A549 (cell line): ENCODE measurements at regions of chr1 and their contacts with region 1.

Region 1: DNA sequence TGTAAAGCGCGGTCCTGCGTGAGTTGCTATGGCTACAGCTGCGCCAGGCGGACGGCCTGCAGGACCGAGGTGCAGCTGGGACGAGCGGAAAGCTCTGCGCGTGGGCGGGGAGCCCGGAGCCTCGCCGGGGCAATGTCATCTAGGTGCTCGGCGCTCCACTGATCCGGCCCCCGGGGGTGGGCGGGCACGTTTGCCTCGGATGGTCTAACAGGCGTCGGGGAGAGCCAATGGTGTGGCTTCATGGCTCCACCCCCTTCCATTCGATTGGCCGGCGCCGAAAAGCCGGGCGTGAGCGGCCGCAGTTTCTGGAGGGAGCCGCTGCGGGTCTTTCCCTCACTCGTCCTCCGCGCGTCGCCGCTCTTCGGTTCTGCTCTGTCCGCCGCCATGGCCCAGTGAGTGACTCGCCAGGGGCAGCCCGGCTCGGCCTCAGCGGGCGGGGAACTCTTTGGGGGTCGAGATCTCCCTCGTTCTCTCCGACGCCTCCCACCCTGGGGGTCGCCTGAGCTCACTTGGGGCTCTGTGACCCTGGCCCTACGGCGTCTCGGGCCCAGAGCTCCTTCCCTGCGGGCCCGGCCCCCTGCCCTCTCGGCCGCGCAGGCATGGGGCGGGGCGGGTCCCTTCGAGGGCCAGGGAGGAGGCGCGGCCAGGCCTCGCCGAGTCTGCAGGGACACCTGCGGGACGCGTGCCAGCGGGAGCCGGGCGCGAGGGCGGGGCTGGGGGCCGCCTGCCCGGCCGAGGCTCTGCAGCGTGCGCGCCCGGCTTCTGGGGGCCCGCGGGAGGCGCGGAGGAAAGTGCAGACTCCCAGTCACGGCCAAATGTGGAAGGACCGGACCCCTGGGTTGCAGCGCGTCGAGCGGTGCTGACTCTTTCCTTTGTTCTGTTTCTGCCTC is at the start of gene PGD:
- DNase-seq: peak; percentile 88 to 97
- ATAC-seq: peak; percentile 93
- H3K4me3 ChIP-seq: peak within 1 kb of the TSS; percentile 89
- H3K27ac ChIP-seq: peak within 1 kb of the TSS; percentile 95 to 99
- H3K4me1 ChIP-seq: peaks cover 13% of the 10 kb centered on the region
- CTCF ChIP-seq: no peak
- EP300 ChIP-seq: no peak
- POLR2A ChIP-seq: peak; percentile 50
- RAD21 ChIP-seq: no peak
- polyA plus RNA-seq, gene PGD: 700 and 1,019 TPM in 2 replicates

Region 2: GRCh38 chr1:10152709-10153284 is 246.2 kb before region 1 on chr1:
- CTCF ChIA-PET with region 1: no interaction called
- POLR2A ChIA-PET with region 1: no interaction called
- DNase-seq: peak; percentile 15 to 45
- ATAC-seq: peak; percentile 50 to 82; a peak in 4 of 6 replicates
- H3K4me3 ChIP-seq: no peak overlapping the region
- H3K27ac ChIP-seq: no peak overlapping the region
- H3K4me1 ChIP-seq: no peaks in the 10 kb centered on the region
- CTCF ChIP-seq: peak; percentile 38
- EP300 ChIP-seq: no peak
- POLR2A ChIP-seq: no peak
- RAD21 ChIP-seq: peak; percentile 48 to 72; a peak in 4 of 5 replicates

Region 3: GRCh38 chr1:10415211-10415930 is 16.4 kb after region 1 on chr1:
- CTCF ChIA-PET with region 1: interaction called, 5 read pairs
- POLR2A ChIA-PET with region 1: interaction called, 25 read pairs
- DNase-seq: peak; percentile 51 to 96
- ATAC-seq: peak; percentile 80 to 81
- H3K4me3 ChIP-seq: peak overlapping the region; percentile 10; the same call in 1 of the 3 replicates
- H3K27ac ChIP-seq: peak overlapping the region; percentile 95 to 99
- H3K4me1 ChIP-seq: peaks cover 98% of the 10 kb centered on the region
- CTCF ChIP-seq: no peak
- EP300 ChIP-seq: peak; percentile 68 to 87; a peak in 3 of 5 replicates
- POLR2A ChIP-seq: no peak
- RAD21 ChIP-seq: no peak; a peak in 1 of 5 replicates